ENCODE measurements at regions of chr10 and their contacts with region 1.

Region 1: GRCh38 chr10:80459047-80459931 is 5.2 kb downstream of the TSPAN14 start:
- DNase-seq: peak; percentile 90
- ATAC-seq: peak; percentile 63
- H3K4me3 Mint-ChIP-seq: peak overlapping the region; percentile 99
- H3K27ac Mint-ChIP-seq: peak overlapping the region; percentile 90
- H3K4me1 Mint-ChIP-seq: peaks cover 82% of the 10 kb centered on the region
- H3K27me3 Mint-ChIP-seq: no peaks in the 10 kb centered on the region

Region 2: DNA sequence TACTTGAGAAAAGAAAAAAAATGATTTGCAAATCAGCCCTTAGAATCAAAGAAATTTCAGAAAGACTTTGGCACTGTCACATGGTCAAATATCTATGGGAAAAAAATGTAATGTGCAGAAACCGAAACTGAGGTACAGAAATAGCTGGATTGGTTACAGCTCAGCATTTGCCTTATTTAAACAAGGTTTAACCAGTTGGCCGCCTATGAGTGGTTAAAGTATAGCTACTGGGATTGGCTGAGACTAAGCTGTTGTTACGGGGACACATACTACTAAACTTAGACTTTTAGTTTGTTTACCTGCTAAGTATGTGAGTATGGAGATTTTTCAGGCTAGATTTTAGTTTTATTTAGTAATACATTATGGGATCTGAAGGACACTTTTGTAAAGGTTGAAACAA is 548.9 kb before region 1 on chr10:
- CTCF ChIA-PET with region 1: no interaction called
- POLR2A ChIA-PET with region 1: no interaction called
- DNase-seq: no peak
- ATAC-seq: no peak
- H3K4me3 Mint-ChIP-seq: no peak overlapping the region
- H3K27ac Mint-ChIP-seq: no peak overlapping the region
- H3K4me1 Mint-ChIP-seq: peaks cover 1% of the 10 kb centered on the region
- H3K27me3 Mint-ChIP-seq: peaks cover 46% of the 10 kb centered on the region

Region 3: DNA sequence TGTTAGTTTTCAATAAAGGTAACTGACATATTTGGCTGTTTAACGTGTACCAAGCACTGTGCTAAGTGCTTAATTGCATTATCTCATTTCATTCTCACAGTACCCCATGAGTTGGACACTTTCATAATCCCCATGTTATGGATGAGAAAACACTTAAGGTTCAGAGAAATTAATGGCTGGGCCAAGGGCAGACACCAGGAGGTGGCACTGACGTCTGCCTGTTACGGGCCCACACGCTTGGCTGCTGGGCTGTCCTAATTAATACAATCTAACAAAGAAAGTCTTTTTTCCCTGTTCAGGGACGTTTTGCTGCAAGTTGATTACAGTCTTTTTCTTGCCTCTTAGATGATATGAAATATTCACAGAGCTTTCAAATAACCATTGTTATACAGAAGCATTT is 86.6 kb before region 1 on chr10:
- CTCF ChIA-PET with region 1: no interaction called
- POLR2A ChIA-PET with region 1: no interaction called
- DNase-seq: no peak
- ATAC-seq: no peak
- H3K4me3 Mint-ChIP-seq: no peak overlapping the region
- H3K27ac Mint-ChIP-seq: no peak overlapping the region
- H3K4me1 Mint-ChIP-seq: no peaks in the 10 kb centered on the region
- H3K27me3 Mint-ChIP-seq: peaks cover 5% of the 10 kb centered on the region

Region 4: DNA sequence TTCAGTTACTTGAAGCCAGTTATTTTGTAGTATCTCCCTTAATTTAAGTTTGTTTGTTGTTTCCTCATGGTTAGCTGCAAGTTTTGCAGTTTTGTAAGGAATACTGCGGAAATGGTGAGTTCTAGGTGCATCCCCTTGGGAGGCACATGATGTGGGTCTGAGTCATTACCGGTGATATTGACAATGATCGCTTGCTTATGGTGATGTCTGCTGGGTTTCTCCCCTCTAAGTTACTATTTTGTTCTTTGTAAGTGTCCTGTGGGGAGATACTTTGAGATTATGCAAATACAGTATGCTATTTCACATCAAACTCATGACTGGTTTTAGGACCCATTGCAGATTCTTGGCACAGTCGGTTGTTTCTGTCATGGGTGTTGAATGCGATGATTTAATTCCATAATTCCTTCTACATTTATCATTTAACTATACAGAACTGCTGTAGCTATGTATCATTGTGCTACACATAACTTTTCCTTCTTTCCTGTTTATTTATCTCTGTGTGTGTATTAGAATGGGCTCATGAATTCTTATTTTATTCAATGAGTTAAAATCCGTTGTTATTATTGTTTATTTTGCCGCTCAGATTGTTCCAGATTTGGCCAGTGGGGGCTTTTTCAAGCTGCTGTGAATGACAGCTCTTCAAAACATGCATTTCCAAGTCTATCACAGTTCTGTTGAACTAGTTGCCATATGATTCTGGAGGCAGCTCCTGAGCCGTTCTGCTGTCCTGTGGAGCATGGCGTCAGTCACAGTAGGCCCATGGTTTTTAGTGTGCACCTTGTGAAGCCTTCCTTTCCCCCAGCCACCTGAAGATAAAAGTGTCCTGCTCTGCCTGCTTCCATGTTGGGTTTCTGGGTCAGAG is 13.2 kb after region 1 on chr10:
- CTCF ChIA-PET with region 1: interaction called, 114 read pairs
- POLR2A ChIA-PET with region 1: interaction called, 86 read pairs
- DNase-seq: no peak
- ATAC-seq: peak; percentile 40
- H3K4me3 Mint-ChIP-seq: peak overlapping the region; percentile 43
- H3K27ac Mint-ChIP-seq: peak overlapping the region; percentile 77
- H3K4me1 Mint-ChIP-seq: peaks cover 88% of the 10 kb centered on the region
- H3K27me3 Mint-ChIP-seq: no peaks in the 10 kb centered on the region

Region 5: GRCh38 chr10:80493522-80494051 is 34.3 kb after region 1 on chr10:
- CTCF ChIA-PET with region 1: interaction called, 1,113 read pairs
- POLR2A ChIA-PET with region 1: interaction called, 67 read pairs
- DNase-seq: no peak
- ATAC-seq: peak; percentile 72
- H3K4me3 Mint-ChIP-seq: peak overlapping the region; percentile 51
- H3K27ac Mint-ChIP-seq: peak overlapping the region; percentile 82
- H3K4me1 Mint-ChIP-seq: peaks cover 99% of the 10 kb centered on the region
- H3K27me3 Mint-ChIP-seq: no peaks in the 10 kb centered on the region

Region 6: GRCh38 chr10:80498833-80499741 is 39.8 kb after region 1 on chr10:
- CTCF ChIA-PET with region 1: interaction called, 1,113 read pairs
- POLR2A ChIA-PET with region 1: interaction called, 10 read pairs
- DNase-seq: peak; percentile 71
- ATAC-seq: peak; percentile 70
- H3K4me3 Mint-ChIP-seq: peak overlapping the region; percentile 64
- H3K27ac Mint-ChIP-seq: peak overlapping the region; percentile 90
- H3K4me1 Mint-ChIP-seq: peaks cover 97% of the 10 kb centered on the region
- H3K27me3 Mint-ChIP-seq: no peaks in the 10 kb centered on the region